Caco-2 (cell line): ENCODE measurements at regions of chr1 and their contacts with region 1.

Region 1: GRCh38 chr1:165914136-165914798 is 86.9 kb downstream of the UCK2 start:
- DNase-seq: peak; percentile 59 to 75
- H3K4me3 ChIP-seq: no peak overlapping the region
- H3K4me3 Mint-ChIP-seq: no peak overlapping the region
- H3K27ac Mint-ChIP-seq: no peak overlapping the region
- H3K4me1 ChIP-seq: peaks cover 20% of the 10 kb centered on the region
- H3K4me1 Mint-ChIP-seq: peaks cover 16% of the 10 kb centered on the region
- H3K27me3 ChIP-seq: no peaks in the 10 kb centered on the region
- H3K27me3 Mint-ChIP-seq: no peaks in the 10 kb centered on the region
- CTCF ChIP-seq: peak; percentile 83

Region 2: GRCh38 chr1:165403835-165404482 is 510.3 kb before region 1 on chr1:
- CTCF ChIA-PET with region 1: no interaction called
- POLR2A ChIA-PET with region 1: no interaction called
- intact Hi-C with region 1: loop called (anchors 10 kb)
- DNase-seq: peak; percentile 42 to 62
- H3K4me3 ChIP-seq: no peak overlapping the region
- H3K4me3 Mint-ChIP-seq: no peak overlapping the region
- H3K27ac Mint-ChIP-seq: no peak overlapping the region
- H3K4me1 ChIP-seq: no peaks in the 10 kb centered on the region
- H3K4me1 Mint-ChIP-seq: no peaks in the 10 kb centered on the region
- H3K27me3 ChIP-seq: no peaks in the 10 kb centered on the region; the same call in 1 of the 2 replicates
- H3K27me3 Mint-ChIP-seq: peaks cover 7% of the 10 kb centered on the region
- CTCF ChIP-seq: peak; percentile 53 to 69

Region 3: GRCh38 chr1:165717918-165718515 is 196.2 kb before region 1 on chr1:
- CTCF ChIA-PET with region 1: no interaction called
- POLR2A ChIA-PET with region 1: no interaction called
- intact Hi-C with region 1: loop called (anchors 1 kb)
- DNase-seq: peak; percentile 57 to 65
- H3K4me3 ChIP-seq: no peak overlapping the region
- H3K4me3 Mint-ChIP-seq: no peak overlapping the region
- H3K27ac Mint-ChIP-seq: no peak overlapping the region
- H3K4me1 ChIP-seq: no peaks in the 10 kb centered on the region
- H3K4me1 Mint-ChIP-seq: no peaks in the 10 kb centered on the region
- H3K27me3 ChIP-seq: no peaks in the 10 kb centered on the region; the same call in 1 of the 2 replicates
- H3K27me3 Mint-ChIP-seq: no peaks in the 10 kb centered on the region
- CTCF ChIP-seq: peak; percentile 56 to 88

Region 4: GRCh38 chr1:165768513-165769394 is 145.5 kb before region 1 on chr1 and contains the start of gene TMCO1:
- CTCF ChIA-PET with region 1: no interaction called
- POLR2A ChIA-PET with region 1: no interaction called
- intact Hi-C with region 1: loop called (anchors 1 kb)
- DNase-seq: peak; percentile 95 to 98
- H3K4me3 ChIP-seq: peak within 1 kb of the TSS; percentile 73
- H3K4me3 Mint-ChIP-seq: peak within 1 kb of the TSS; percentile 94
- H3K27ac Mint-ChIP-seq: peak within 1 kb of the TSS; percentile 96
- H3K4me1 ChIP-seq: peaks cover 19% of the 10 kb centered on the region
- H3K4me1 Mint-ChIP-seq: peaks cover 37% of the 10 kb centered on the region
- H3K27me3 ChIP-seq: no peaks in the 10 kb centered on the region
- H3K27me3 Mint-ChIP-seq: no peaks in the 10 kb centered on the region
- CTCF ChIP-seq: no peak
- total RNA-seq, gene TMCO1: 138 and 152 TPM in 2 replicates